ENCODE measurements at regions of chr7 and their contacts with region 1.

Region 1: GRCh38 chr7:135170274-135170997 is at the start of gene CYREN:
- DNase-seq: peak; percentile 88 to 95
- H3K4me3 ChIP-seq: peak within 1 kb of the TSS; percentile 88
- H3K27ac ChIP-seq: peak within 1 kb of the TSS; percentile 81
- H3K4me1 ChIP-seq: peaks cover 19% of the 10 kb centered on the region
- H3K27me3 ChIP-seq: no peaks in the 10 kb centered on the region
- CTCF ChIP-seq: peak; percentile 73
- total RNA-seq, gene CYREN: 70.5 and 76.0 TPM in 2 replicates

Region 2: DNA sequence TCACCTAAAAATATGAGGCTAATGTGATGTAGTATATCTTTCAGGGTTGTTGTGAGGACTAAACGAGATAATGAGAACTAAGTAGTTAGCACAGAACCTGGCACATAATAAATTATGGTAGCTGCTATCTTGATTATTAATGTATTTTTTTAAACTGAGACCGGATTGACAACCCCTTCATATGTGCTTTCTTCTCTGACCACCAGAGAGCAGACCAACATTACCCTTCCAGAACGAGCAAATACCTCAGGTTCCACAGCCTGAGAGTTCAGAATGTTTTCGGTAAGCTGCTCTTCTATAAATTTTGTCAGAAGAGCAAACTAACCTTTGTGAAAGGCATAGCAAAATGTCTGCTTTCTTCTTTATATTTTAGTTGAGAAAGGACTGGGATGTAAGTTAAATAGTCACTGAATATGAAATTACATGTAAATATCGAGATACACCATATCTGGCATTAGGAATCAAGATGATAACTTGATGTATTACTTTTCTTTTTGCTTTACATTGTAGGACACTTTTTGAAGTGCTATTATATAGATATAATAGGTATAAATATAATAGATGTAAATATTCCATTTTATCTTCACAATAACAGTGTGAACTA is 537.4 kb before region 1 on chr7:
- CTCF ChIA-PET with region 1: interaction called, 3 read pairs
- POLR2A ChIA-PET with region 1: no interaction called
- intact Hi-C with region 1: loop called (anchors 2 kb)
- DNase-seq: peak in 1 of 2 experiments; percentile 32
- H3K4me3 ChIP-seq: no peak overlapping the region
- H3K27ac ChIP-seq: no peak overlapping the region
- H3K4me1 ChIP-seq: peaks cover 6% of the 10 kb centered on the region
- H3K27me3 ChIP-seq: no peaks in the 10 kb centered on the region
- CTCF ChIP-seq: peak; percentile 83

Region 3: DNA sequence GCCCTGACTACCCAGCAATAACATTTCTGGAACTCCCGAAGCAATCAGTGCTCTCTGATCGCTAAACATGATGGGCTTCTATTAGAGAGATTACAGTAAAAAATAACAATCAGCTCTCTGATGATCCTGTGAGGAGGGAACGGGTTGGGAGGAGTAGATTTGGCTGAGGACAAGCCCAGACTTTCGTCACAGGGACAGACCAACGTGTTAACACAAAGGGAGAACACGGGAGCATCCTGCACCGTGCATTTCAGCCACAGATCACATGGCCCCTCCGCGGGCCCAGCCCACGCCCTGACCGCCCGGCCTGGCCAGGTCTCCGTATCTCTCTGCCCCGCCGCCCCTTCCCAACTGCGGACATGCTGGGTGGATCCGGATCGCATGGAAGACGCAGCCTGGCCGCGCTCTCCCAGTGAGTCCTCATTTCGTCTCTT is 279.2 kb before region 1 on chr7:
- CTCF ChIA-PET with region 1: no interaction called
- POLR2A ChIA-PET with region 1: no interaction called
- intact Hi-C with region 1: loop called (anchors 1 kb)
- DNase-seq: peak; percentile 85 to 89
- H3K4me3 ChIP-seq: peak overlapping the region; percentile 63
- H3K27ac ChIP-seq: peak overlapping the region; percentile 43
- H3K4me1 ChIP-seq: peaks cover 43% of the 10 kb centered on the region
- H3K27me3 ChIP-seq: no peaks in the 10 kb centered on the region
- CTCF ChIP-seq: no peak

Region 4: GRCh38 chr7:134986363-134987251 is 183.8 kb before region 1 on chr7 and contains the start of gene AGBL3:
- CTCF ChIA-PET with region 1: no interaction called
- POLR2A ChIA-PET with region 1: interaction called, 4 read pairs
- intact Hi-C with region 1: loop called (anchors 2 kb)
- DNase-seq: peak; percentile 88 to 96
- H3K4me3 ChIP-seq: peak within 1 kb of the TSS; percentile 75
- H3K27ac ChIP-seq: peak within 1 kb of the TSS; percentile 26
- H3K4me1 ChIP-seq: peaks cover 18% of the 10 kb centered on the region
- H3K27me3 ChIP-seq: no peaks in the 10 kb centered on the region
- CTCF ChIP-seq: peak; percentile 80
- total RNA-seq, gene AGBL3: 3.2 and 4.3 TPM in 2 replicates

Region 5: DNA sequence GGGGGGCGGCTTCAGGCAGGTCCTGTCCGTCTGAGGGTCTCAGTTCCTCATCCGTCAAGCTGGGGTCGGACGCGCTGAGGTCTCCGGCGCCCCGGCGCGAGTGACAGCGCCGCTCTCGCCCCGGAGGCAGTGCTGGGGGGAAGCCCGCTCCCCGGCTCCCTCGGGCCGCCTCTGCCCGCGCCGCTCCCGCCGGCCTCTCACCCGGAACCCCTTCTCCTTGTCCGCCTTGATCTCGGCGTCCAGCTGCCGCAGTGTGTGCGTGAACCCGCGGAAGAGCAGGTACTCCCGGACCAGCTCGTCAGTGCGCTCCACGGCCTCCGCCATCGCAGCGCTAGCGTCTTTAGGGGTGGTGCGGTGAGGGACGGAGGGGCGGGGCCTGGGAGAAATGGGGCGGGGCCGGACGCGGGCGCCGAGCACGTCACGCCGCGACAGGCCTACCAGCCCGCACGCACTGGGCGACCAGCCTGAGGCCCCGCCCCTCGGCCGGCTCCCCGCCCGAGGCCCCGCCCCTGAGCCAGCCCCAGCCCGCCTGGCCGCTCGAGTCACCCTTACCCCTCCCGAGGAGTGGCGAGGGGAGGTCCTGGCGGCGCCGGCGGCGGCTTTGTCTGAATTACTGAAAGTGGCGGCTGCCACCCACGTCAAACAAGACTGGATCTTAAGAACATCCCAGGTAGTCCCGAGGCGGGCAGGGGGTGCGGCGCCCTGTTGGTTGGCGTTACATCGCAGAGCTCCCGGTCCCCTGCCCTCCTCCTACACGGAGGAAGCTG is 40.9 kb after region 1 on chr7 and contains the start of gene WDR91:
- CTCF ChIA-PET with region 1: no interaction called
- POLR2A ChIA-PET with region 1: no interaction called
- intact Hi-C with region 1: loop called (anchors 1 kb)
- DNase-seq: peak; percentile 84 to 95
- H3K4me3 ChIP-seq: peak within 1 kb of the TSS; percentile 76
- H3K27ac ChIP-seq: peak within 1 kb of the TSS; percentile 48
- H3K4me1 ChIP-seq: no peaks in the 10 kb centered on the region; the same call in 1 of the 2 replicates
- H3K27me3 ChIP-seq: no peaks in the 10 kb centered on the region
- CTCF ChIP-seq: no peak
- total RNA-seq, gene WDR91: 7.6 and 8.4 TPM in 2 replicates

Region 6: GRCh38 chr7:135253898-135254771 is 83.7 kb after region 1 on chr7:
- CTCF ChIA-PET with region 1: no interaction called
- POLR2A ChIA-PET with region 1: no interaction called
- intact Hi-C with region 1: no loop called
- DNase-seq: peak; percentile 48 to 72
- H3K4me3 ChIP-seq: peak overlapping the region; percentile 1; the same call in 1 of the 2 replicates
- H3K27ac ChIP-seq: peak overlapping the region; percentile 68
- H3K4me1 ChIP-seq: peaks cover 20% of the 10 kb centered on the region
- H3K27me3 ChIP-seq: no peaks in the 10 kb centered on the region
- CTCF ChIP-seq: no peak

Region 7: DNA sequence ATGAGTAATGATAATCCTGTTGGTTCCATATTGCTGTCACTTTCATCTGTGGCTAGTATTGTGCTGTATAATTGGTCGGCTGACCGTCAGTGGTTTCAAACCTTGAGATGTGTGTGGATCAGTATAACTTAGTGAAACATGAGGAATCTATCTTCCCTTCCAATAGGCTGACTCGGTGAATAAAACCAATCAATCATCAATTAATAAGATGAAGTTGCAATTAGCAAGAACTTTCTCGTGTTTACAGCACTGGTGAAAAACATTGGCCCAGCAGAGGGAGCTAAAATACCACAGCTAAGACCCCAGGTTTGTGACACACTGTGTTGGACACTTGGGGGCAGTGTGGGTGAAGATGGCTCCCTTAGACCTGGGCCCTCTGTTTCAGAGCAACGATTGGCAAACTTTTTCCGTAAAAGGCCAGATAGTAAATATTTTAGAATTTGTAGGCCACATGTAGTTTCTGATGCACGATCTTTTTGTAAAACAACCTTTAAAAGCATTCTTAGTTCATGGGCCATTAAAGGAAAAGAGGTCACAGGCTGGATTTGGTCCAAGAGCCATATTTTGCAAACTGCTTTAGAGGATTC is 111.0 kb after region 1 on chr7:
- CTCF ChIA-PET with region 1: no interaction called
- POLR2A ChIA-PET with region 1: no interaction called
- intact Hi-C with region 1: loop called (anchors 2 kb)
- DNase-seq: peak; percentile 49 to 76
- H3K4me3 ChIP-seq: no peak overlapping the region
- H3K27ac ChIP-seq: no peak overlapping the region
- H3K4me1 ChIP-seq: no peaks in the 10 kb centered on the region
- H3K27me3 ChIP-seq: no peaks in the 10 kb centered on the region
- CTCF ChIP-seq: peak; percentile 99

Region 8: GRCh38 chr7:135558337-135558767 is 387.9 kb after region 1 on chr7:
- CTCF ChIA-PET with region 1: no interaction called
- POLR2A ChIA-PET with region 1: no interaction called
- intact Hi-C with region 1: loop called (anchors 5 kb)
- DNase-seq: peak; percentile 70
- H3K4me3 ChIP-seq: peak overlapping the region; percentile 85
- H3K27ac ChIP-seq: peak overlapping the region; percentile 91
- H3K4me1 ChIP-seq: peaks cover 6% of the 10 kb centered on the region
- H3K27me3 ChIP-seq: no peaks in the 10 kb centered on the region
- CTCF ChIP-seq: peak; percentile 70